Heart left ventricle (tissue), 16 donors: ENCODE measurements at regions of chr6 and their contacts with region 1.

Region 1: GRCh38 chr6:72968704-72969103 is 256.6 kb downstream of the KHDC1L start:
- DNase-seq: no peak
- ATAC-seq: no peak
- H3K4me3 ChIP-seq: no peak overlapping the region
- H3K27ac ChIP-seq: no peak overlapping the region
- H3K4me1 ChIP-seq: no peaks in the 10 kb centered on the region
- H3K27me3 ChIP-seq: no peaks in the 10 kb centered on the region
- CTCF ChIP-seq: no peak
- POLR2A ChIP-seq: no peak

Region 2: GRCh38 chr6:72886170-72886569 is 82.5 kb before region 1 on chr6:
- intact Hi-C with region 1: no loop called
- DNase-seq: no peak
- ATAC-seq: no peak
- H3K4me3 ChIP-seq: no peak overlapping the region
- H3K27ac ChIP-seq: no peak overlapping the region
- H3K4me1 ChIP-seq: no peaks in the 10 kb centered on the region
- H3K27me3 ChIP-seq: no peaks in the 10 kb centered on the region
- CTCF ChIP-seq: no peak
- POLR2A ChIP-seq: no peak

Region 3: GRCh38 chr6:73169111-73169510 is 200.4 kb after region 1 on chr6:
- intact Hi-C with region 1: loop called in 1 of 10 experiments (anchors 5 kb)
- DNase-seq: no peak
- ATAC-seq: no peak
- H3K4me3 ChIP-seq: no peak overlapping the region
- H3K27ac ChIP-seq: no peak overlapping the region
- H3K4me1 ChIP-seq: no peaks in the 10 kb centered on the region
- H3K27me3 ChIP-seq: peaks cover 0 to 4% (median 0%) of the 10 kb centered on the region in 9 donors
- CTCF ChIP-seq: no peak
- POLR2A ChIP-seq: no peak